Left cardiac atrium (tissue), 4 donors: ENCODE measurements at regions of chr2 and their contacts with region 1.

Region 1: GRCh38 chr2:222854773-222855700 is 5.8 kb upstream of the ACSL3 start:
- DNase-seq: no peak
- ATAC-seq: no peak

Region 2: DNA sequence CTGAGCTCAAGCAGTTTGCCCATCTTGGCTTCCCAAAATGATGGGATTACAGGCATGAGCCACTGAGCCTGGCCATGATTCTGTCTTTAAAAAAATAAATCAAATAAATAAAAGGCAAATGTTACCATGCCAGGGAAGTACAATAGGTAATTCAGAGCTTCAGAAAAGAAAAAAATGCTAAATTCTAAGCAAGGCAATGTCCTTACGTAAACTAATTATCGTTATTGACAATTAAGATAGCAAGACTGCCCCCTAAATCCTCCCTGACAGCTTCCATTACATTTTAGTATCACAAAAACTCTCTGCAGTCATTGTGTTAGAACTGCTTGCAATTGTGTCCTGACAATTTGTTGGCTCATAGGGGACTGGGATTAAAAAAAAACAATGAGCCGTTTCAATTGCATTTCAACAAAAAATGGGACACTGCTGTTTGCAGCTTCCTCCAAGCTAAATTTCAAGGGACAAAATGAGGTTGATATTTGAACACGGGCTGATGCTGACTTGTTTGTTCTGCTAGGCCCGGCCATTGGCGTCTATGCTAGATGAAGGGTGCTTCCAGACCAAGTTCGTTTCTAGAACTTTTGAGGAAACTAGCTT is 94.6 kb before region 1 on chr2:
- intact Hi-C with region 1: no loop called
- DNase-seq: no peak
- ATAC-seq: no peak

Region 3: DNA sequence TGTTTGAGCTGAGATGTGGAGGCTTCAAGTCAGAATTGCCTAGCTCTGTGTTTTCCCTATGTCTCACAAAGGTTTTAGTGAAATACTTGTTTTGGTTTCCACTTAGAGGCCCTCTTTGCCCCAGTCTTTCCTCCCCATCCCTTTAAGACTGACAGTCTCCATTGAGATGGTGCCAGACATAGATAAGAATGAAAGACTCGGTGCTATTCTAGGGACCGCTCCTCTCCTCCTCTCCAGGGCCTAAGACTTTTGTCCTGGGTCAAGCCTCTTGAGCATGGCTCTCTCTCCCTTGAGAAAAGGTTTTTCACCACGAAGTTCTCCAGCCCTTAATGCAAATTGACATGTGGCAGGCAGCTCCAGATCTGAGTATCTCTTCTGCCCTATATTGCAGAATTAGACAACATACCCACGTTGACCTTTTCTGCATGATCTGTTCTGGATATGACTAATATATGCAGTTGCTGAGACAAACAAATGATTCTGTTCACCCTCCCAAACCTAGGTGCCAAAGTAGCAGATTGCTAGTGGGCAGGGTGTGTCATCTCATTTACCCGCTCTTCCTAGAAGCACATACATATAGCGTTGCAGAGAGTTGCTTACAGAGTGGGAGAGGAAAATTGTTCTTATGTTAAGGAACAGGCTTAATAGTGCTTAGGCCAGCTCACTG is 41.7 kb before region 1 on chr2:
- intact Hi-C with region 1: loop called in 1 of 2 experiments (anchors 5 kb)
- DNase-seq: no peak
- ATAC-seq: no peak